ENCODE measurements at regions of chr3 and their contacts with region 1.

Region 1: DNA sequence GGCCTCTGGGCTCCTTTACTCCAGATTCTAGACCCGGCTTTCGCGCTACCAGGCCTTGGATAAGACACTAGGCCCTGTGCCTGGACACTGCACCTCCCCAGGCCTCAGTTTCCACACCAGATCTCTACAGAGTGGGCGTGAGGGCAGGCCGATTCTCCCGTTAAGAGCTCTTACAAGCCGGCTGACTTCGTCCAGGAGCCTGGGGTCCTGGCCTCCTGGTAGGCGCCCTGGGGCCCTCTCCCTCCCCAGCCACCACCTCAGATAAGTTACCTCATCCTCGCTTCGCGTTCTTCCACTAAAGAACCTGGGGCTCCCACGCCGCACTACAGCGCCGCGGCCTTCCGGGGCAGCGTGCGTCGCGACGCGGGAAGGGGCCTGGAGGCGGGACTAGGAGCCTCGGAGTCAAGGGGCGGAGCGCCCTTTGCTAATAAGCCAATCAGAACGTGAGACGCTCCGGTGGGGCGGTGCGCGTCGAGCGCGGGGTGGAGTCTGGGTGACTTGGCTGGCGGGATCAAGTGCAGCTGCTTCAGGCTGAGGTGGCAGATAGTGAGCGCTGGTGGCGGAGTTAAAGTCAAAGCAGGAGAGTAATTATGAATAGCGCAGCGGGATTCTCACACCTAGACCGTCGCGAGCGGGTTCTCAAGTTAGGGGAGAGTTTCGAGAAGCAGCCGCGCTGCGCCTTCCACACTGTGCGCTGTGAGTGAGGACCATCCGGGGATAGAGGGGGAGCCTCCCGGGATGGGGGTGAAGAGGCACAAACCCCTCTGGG is at the starts of genes EAF2 and IQCB1:
- DNase-seq: peak; percentile 95
- H3K4me3 Mint-ChIP-seq: peak within 1 kb of the TSS; percentile 98
- H3K27ac Mint-ChIP-seq: peak within 1 kb of the TSS; percentile 97
- H3K4me1 Mint-ChIP-seq: peaks cover 60% of the 10 kb centered on the region
- H3K27me3 Mint-ChIP-seq: no peaks in the 10 kb centered on the region
- total RNA-seq, gene EAF2: 15.3 and 18.8 TPM in 2 replicates
- total RNA-seq, gene IQCB1: 45.2 and 50.4 TPM in 2 replicates

Region 2: DNA sequence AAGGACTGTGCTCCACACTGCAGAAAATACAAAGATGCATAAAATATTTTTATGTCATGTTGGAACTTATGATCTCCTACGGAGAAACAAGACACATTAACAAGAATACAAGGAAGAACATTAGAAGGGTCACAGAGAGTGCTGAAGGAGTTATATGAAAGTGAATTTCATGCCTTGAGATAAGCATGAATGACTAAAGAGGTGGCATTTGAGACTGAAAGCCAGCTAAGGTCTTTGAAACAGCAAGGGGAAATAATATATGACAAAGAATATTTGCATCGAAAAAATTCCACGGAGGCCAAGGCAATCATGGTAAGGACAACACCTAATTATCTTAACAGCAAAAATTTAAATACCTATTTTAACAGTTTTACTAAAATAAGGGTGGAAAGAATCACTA is 1753.2 kb before region 1 on chr3:
- intact Hi-C with region 1: no loop called
- DNase-seq: no peak
- H3K4me3 Mint-ChIP-seq: no peak overlapping the region
- H3K27ac Mint-ChIP-seq: no peak overlapping the region
- H3K4me1 Mint-ChIP-seq: peaks cover 39% of the 10 kb centered on the region
- H3K27me3 Mint-ChIP-seq: no peaks in the 10 kb centered on the region

Region 3: DNA sequence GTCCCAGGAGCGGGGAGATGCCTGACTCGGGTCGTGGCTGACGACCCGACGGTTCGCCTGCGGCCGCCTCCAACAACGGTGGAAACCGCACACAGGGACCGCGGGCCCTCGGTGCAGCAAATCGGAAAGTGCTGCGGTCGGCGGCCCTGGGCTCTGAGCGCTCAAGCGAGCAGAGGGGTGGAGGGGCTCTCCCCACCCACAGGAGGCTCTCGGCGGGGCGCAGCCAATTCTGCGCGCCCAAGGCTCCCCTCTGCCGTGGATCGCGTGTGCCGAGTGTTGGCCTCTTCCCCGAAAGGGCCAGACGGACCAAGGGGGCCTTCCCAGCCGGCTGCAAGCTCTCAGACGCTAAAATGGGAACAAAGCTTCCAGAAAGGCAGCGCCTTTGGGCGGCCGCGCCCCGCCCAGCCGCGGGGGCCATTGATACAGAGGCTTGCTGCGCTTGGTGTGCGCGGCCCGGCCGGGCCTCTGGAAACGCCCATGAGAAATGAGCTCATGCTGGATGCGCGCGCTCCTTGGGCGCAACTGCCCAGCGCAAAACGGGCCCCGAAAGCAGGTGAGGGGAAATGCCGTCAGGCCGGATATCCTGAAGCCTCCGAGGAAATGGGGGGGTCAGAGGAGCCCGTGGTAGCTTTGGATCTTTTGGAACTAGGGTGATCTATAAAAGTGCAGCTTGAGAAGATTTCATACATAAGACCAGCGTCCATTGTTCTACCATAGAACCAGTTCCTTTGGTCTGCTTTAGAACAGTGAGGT is 1739.5 kb before region 1 on chr3:
- intact Hi-C with region 1: loop called (anchors 5 kb)
- DNase-seq: peak; percentile 91
- H3K4me3 Mint-ChIP-seq: no peak overlapping the region
- H3K27ac Mint-ChIP-seq: no peak overlapping the region
- H3K4me1 Mint-ChIP-seq: peaks cover 19% of the 10 kb centered on the region
- H3K27me3 Mint-ChIP-seq: no peaks in the 10 kb centered on the region

Region 4: DNA sequence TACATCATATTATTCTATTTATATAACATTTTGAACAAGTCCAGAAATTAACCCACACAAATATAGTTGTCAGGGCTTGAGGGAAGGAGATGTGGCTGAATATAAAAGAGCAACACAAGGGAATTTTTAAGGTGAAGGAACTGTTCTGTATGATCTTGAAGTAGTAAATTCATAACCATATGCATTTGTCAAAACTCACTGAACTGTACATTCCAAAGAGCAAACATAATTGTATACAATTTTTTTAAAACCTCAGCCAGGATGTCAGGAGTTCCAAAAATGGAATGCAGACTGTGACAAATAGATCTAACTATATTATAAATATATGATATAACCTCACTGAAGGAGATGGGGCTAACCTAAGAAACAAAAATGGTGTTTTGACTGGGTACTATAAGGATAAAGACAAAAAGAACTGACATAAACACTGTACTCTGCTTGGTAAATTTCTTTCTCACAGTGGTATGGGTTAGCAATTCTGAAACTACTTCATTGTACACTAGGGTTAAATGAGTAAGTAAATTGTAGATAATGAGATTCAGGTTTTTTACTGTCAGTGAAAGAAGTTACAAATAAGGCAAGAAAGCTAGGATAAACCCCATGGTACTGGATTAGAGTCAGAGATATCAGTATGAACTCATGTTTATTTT is 99.7 kb before region 1 on chr3:
- intact Hi-C with region 1: loop called (anchors 1 kb)
- DNase-seq: no peak
- H3K4me3 Mint-ChIP-seq: no peak overlapping the region
- H3K27ac Mint-ChIP-seq: peak overlapping the region; percentile 36
- H3K4me1 Mint-ChIP-seq: peaks cover 41% of the 10 kb centered on the region
- H3K27me3 Mint-ChIP-seq: no peaks in the 10 kb centered on the region

Region 5: GRCh38 chr3:122074621-122075265 is 239.9 kb after region 1 on chr3:
- intact Hi-C with region 1: loop called (anchors 2 kb)
- DNase-seq: peak; percentile 43
- H3K4me3 Mint-ChIP-seq: peak overlapping the region; percentile 71
- H3K27ac Mint-ChIP-seq: peak overlapping the region; percentile 87
- H3K4me1 Mint-ChIP-seq: peaks cover 62% of the 10 kb centered on the region
- H3K27me3 Mint-ChIP-seq: no peaks in the 10 kb centered on the region

Region 6: DNA sequence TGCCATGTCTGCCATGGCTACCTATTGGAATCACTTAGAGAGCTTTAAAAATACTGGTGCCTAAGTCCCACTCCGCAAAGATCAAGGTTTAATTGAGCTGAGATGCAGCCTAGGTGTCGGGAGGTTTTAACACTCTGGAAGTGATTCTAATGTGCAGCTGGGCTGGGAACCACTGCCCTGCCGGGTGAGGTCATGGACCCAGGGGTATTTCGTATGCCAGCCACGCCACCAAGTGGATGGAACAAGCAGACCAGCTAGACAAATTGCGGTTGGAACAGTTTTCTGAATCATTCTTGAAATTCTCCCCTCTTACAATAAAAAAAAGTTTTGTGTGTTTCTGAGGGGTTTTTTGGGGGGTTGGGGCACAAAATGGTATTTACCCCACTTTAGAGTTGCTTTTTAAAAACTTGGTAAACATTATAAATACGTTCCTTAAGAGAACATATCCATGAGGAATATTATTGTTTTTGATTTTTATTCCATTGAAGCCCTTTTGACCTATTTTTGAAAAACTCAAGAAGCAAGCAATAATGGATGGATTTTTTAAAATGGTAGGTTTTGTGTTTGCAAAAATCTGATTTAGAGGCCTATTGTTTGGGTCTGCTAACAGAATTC is 424.0 kb after region 1 on chr3:
- intact Hi-C with region 1: loop called (anchors 2 kb)
- DNase-seq: peak; percentile 47
- H3K4me3 Mint-ChIP-seq: no peak overlapping the region
- H3K27ac Mint-ChIP-seq: peak overlapping the region; percentile 35
- H3K4me1 Mint-ChIP-seq: peaks cover 22% of the 10 kb centered on the region
- H3K27me3 Mint-ChIP-seq: peaks cover 17% of the 10 kb centered on the region

Region 7: DNA sequence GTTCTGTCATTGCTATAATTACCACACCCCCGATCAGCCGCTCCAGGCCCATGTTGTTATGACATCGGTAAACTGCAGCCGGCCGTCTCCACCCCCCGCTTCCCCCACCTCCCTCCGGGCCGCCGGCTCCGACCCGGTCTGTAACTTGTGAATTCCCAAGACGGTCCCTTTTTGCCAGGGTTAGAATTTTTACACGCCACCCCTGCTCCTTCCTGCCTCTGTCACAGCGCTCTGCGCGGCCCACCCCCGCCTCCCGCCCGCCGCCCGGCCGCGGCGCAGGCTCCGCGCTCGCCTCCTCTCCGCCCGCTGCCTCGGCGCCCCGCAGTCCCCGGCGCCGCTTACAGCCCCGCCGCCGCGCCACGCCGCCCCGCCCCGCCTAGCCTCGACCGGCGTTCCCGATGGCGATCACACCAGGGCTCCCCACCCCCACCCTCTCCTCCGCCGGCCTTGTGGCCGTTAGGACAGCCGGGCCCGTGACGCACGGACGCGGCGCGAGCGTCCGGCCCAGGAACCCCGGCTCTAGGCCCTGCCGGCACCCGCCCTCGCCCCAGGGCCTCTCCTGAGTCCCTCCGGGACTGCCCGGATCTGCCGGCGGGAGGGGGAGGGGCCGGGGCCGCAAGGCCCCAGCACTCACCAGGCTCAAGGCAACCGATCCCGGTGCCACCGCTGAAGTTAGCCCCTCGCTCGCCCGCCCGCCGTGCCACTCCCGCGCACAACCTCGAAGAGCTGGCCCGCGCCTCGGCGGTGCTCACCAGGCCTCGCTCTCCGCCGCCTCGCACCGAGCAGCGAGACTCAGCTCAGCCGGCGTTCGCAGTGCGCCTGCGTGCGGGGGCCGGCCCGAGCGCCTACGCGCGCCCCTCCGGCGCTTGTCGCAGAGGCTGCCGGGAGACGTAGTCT is 679.5 kb after region 1 on chr3 and contains the start of gene KPNA1:
- intact Hi-C with region 1: loop called (anchors 1 kb)
- DNase-seq: peak; percentile 85
- H3K4me3 Mint-ChIP-seq: peak within 1 kb of the TSS; percentile 90
- H3K27ac Mint-ChIP-seq: peak within 1 kb of the TSS; percentile 92
- H3K4me1 Mint-ChIP-seq: peaks cover 46% of the 10 kb centered on the region
- H3K27me3 Mint-ChIP-seq: peaks cover 4% of the 10 kb centered on the region
- total RNA-seq, gene KPNA1: 81.7 and 88.2 TPM in 2 replicates

Region 8: DNA sequence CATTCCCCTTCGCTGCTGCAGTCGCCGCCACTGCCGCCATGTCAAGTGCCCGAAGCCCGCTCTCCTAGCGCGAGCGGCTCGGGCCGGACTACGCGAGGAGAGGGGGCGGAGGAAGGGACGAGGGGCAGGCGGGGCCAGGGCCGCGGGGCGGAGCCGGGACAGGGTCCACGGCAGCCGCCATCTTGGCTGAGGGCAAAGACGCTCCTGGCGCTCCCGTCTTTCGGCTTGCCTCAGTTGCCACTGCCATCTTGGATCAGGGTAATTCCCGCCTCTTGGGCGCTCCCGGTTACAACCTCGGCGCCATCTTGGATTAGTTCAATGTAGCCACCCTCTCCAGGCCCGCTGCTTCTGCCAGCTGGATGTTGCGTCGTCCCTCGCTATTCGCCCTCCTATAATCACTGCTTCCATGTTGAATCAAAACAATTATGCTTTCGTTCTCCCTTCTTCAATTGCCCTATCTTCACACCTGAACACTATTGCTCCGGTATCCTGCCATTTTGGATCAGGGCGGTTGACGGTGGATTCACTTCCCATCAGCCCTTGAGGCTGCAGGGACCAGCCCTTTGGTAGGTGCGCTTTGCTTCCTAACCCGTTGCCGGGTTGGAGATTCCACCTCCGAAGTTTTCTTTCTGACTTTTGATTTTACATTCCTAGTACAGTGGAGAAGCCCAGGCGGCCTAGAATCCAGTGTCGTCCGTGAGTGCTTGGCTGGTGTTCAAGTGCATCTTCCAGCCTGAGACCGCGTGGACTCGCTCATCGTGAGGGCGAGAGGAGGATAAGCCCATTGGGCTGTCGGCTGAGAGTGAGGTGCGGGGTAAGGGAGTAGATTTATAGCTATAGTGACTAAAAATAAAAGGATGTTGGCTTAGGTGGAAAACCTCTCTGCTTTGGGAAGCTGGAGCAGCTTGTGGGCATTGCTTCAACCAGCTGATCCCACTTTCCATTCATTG is 1750.4 kb after region 1 on chr3 and contains the start of gene HACD2:
- intact Hi-C with region 1: loop called (anchors 10 kb)
- DNase-seq: peak; percentile 93
- H3K4me3 Mint-ChIP-seq: no peak within 1 kb of the TSS
- H3K27ac Mint-ChIP-seq: peak within 1 kb of the TSS; percentile 63
- H3K4me1 Mint-ChIP-seq: peaks cover 23% of the 10 kb centered on the region
- H3K27me3 Mint-ChIP-seq: no peaks in the 10 kb centered on the region
- total RNA-seq, gene HACD2: 31.5 TPM in 2 replicates